Astrocyte of the cerebellum (primary cell): ENCODE measurements at regions of chr2 and their contacts with region 1.

Region 1: GRCh38 chr2:207734264-207734635 is 22.8 kb downstream of the CCNYL1 start:
- DNase-seq: peak; percentile 28
- H3K4me3 ChIP-seq: no peak overlapping the region
- CTCF ChIP-seq: peak; percentile 64

Region 2: DNA sequence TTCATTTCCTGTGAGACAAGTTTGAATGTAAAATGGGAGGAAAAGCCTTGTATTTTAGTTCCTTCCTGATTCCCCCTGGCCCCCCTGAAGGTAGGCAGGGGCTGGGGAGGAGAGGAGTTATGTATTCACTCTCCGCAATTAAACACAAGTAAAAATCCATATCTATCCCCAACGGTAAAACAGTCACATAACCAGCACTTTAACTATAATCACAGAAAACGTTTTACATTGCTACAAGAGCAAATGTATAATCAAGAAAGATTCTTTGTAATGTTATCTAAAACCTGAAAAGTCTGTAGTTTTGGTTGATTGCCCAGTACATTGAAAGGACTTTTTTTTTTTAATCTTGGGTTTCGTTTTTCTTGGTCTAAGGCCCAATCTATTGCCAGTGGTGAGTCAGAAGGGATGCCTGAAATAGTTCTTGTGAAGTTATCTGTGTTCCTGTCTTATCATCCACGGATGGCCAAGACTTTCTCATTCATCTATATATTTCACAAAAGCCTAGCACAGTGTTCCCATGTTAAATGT is 57.4 kb before region 1 on chr2:
- in situ Hi-C with region 1: loop called (anchors 5 kb)
- DNase-seq: peak; percentile 71
- H3K4me3 ChIP-seq: no peak overlapping the region
- CTCF ChIP-seq: no peak